GM12878 (cell line): ENCODE measurements at regions of chr12 and their contacts with region 1.

Region 1: GRCh38 chr12:106986625-106987430 is at the start of gene MTERF2:
- DNase-seq: peak; percentile 65
- ATAC-seq: peak; percentile 100
- H3K4me3 ChIP-seq: peak within 1 kb of the TSS; percentile 87
- H3K27ac ChIP-seq: peak within 1 kb of the TSS; percentile 50; the same call in 1 of the 2 replicates
- H3K4me1 ChIP-seq: 0 out of 2 replicates have a peak, but pooled peaks cover 5% of the 10 kb centered on the region
- H3K27me3 ChIP-seq: no peaks in the 10 kb centered on the region
- CTCF ChIP-seq: no peak
- EP300 ChIP-seq: no peak
- POLR2A ChIP-seq: peak; percentile 59
- RAD21 ChIP-seq: no peak
- polyA plus RNA-seq, gene MTERF2: 2.1 to 3.6 TPM

Region 2: GRCh38 chr12:106910202-106910601 is 76.6 kb before region 1 on chr12:
- CTCF ChIA-PET with region 1: no interaction called
- POLR2A ChIA-PET with region 1: no interaction called
- RAD21 ChIA-PET with region 1: no interaction called
- SMC1A ChIA-PET with region 1: no interaction called
- in situ Hi-C with region 1: no loop called
- intact Hi-C with region 1: loop called (anchors 2 kb)
- DNase-seq: peak; percentile 84
- ATAC-seq: peak; percentile 81
- H3K4me3 ChIP-seq: 0 out of 2 replicates have a peak overlapping the region, but pooled peaks have one; percentile 3
- H3K27ac ChIP-seq: peak overlapping the region; percentile 42; the same call in 1 of the 2 replicates
- H3K4me1 ChIP-seq: peaks cover 28% of the 10 kb centered on the region
- H3K27me3 ChIP-seq: no peaks in the 10 kb centered on the region; a peak in 1 of 4 replicates
- CTCF ChIP-seq: no peak
- EP300 ChIP-seq: peak; percentile 66 to 93
- POLR2A ChIP-seq: no peak
- RAD21 ChIP-seq: no peak

Region 3: GRCh38 chr12:106955377-106956047 is 31.3 kb before region 1 on chr12 and contains the start of gene TMEM263:
- CTCF ChIA-PET with region 1: interaction called, 6 read pairs
- POLR2A ChIA-PET with region 1: interaction called, 12 read pairs
- RAD21 ChIA-PET with region 1: interaction called, 5 read pairs
- SMC1A ChIA-PET with region 1: interaction called, 8 read pairs
- in situ Hi-C with region 1: no loop called
- intact Hi-C with region 1: no loop called
- DNase-seq: peak; percentile 83
- ATAC-seq: peak; percentile 88
- H3K4me3 ChIP-seq: peak within 1 kb of the TSS; percentile 81
- H3K27ac ChIP-seq: peak within 1 kb of the TSS; percentile 74
- H3K4me1 ChIP-seq: peaks cover 4% of the 10 kb centered on the region; the same call in 1 of the 2 replicates
- H3K27me3 ChIP-seq: no peaks in the 10 kb centered on the region
- CTCF ChIP-seq: no peak
- EP300 ChIP-seq: no peak
- POLR2A ChIP-seq: peak; percentile 95
- RAD21 ChIP-seq: no peak
- polyA plus RNA-seq, gene TMEM263: 17.2 to 21.9 TPM